Posterior cingulate gyrus (tissue), 11 donors: ENCODE measurements at regions of chr19 and their contacts with region 1.

Region 1: GRCh38 chr19:2500841-2501249 is 24.9 kb downstream of the GADD45B start:
- DNase-seq: no peak

Region 2: DNA sequence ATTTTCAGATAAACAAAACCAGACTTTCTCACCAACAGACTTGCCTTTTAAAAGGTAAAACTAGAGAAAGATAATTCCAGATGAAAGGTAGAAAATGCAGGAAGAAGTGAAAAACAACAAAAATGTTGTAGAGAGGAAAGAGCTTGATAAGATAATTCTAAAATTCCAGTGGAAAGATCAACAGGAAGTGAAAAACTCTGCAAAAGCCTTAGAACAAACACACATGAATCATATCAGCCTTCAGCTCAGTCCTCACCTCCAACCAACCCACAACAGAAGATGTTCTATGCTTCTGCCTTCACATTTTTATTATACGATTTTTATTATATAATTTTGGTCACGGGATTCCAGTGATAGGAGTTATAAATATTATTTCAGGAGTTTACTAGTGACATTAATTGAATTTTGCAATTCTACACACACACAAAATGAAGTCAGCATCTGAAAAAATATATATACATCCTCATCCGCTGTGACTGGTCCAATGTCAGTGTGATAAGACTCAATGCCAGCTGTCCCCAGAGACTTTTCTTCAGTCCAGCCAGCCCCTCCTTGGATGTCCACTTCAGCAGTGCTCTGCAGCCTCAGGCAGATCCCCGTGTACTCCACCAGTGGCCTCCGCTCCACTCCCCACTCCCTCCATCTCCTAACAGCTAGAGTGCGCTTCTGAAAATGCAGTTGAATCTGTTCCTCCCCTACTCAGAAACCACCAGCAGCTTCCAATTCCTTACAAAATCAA is 33.0 kb after region 1 on chr19:
- intact Hi-C with region 1: loop called (anchors 2 kb)
- DNase-seq: peak in 2 of 10 donors; percentile 2 to 20

Region 3: GRCh38 chr19:2552859-2553258 is 52.0 kb after region 1 on chr19:
- intact Hi-C with region 1: no loop called
- DNase-seq: peak in 3 of 10 donors; percentile 3 to 24 (median 18)